Activated CD8-positive, alpha-beta T cell treated with anti-CD3 and anti-CD28 coated beads, Interleukin-2, amount 10 ng/mL, durations not matched to agents 7 days and 5 days (primary cell): ENCODE measurements at regions of chr3 and their contacts with region 1.

Region 1: DNA sequence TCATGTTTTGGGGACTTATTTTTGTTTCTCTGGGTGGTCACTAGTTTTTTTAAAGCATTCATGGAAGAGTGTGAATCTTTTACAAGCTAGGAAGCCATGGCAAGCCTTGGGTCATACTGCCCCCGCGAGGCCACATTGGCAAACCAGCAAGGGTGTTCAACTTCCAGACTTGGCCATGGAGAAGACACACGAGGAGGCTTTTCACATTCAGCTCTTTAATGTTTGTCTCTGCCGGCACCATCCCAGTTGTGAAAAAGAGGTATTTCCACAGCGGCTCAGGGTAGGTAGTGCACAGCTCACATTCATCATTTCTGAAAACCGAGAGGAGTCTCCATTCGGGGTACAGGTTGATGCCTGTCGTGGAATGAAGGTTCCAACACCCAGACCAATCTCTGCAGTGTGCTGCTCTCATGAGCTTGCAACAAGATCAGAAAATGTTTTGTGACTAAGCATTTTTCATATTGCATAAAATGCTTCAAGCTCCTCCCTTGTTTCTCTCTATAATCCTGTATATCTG is 7.7 kb downstream of the CCR5 start:
- DNase-seq: peak; percentile 82
- ATAC-seq: peak; percentile 50
- H3K4me3 Mint-ChIP-seq: no peak overlapping the region
- H3K27ac Mint-ChIP-seq: no peak overlapping the region
- H3K4me1 Mint-ChIP-seq: peaks cover 76% of the 10 kb centered on the region
- H3K27me3 Mint-ChIP-seq: no peaks in the 10 kb centered on the region

Region 2: GRCh38 chr3:46089237-46090011 is 289.1 kb before region 1 on chr3:
- CTCF ChIA-PET with region 1: interaction called, 287 read pairs
- POLR2A ChIA-PET with region 1: interaction called, 4 read pairs
- DNase-seq: no peak
- ATAC-seq: peak; percentile 37
- H3K4me3 Mint-ChIP-seq: no peak overlapping the region
- H3K27ac Mint-ChIP-seq: peak overlapping the region; percentile 53
- H3K4me1 Mint-ChIP-seq: peaks cover 75% of the 10 kb centered on the region
- H3K27me3 Mint-ChIP-seq: no peaks in the 10 kb centered on the region

Region 3: GRCh38 chr3:46098319-46098761 is 280.1 kb before region 1 on chr3:
- CTCF ChIA-PET with region 1: interaction called, 10 read pairs
- POLR2A ChIA-PET with region 1: no interaction called
- DNase-seq: peak; percentile 80
- ATAC-seq: peak; percentile 72
- H3K4me3 Mint-ChIP-seq: peak overlapping the region; percentile 63
- H3K27ac Mint-ChIP-seq: peak overlapping the region; percentile 99
- H3K4me1 Mint-ChIP-seq: peaks cover 92% of the 10 kb centered on the region
- H3K27me3 Mint-ChIP-seq: no peaks in the 10 kb centered on the region

Region 4: DNA sequence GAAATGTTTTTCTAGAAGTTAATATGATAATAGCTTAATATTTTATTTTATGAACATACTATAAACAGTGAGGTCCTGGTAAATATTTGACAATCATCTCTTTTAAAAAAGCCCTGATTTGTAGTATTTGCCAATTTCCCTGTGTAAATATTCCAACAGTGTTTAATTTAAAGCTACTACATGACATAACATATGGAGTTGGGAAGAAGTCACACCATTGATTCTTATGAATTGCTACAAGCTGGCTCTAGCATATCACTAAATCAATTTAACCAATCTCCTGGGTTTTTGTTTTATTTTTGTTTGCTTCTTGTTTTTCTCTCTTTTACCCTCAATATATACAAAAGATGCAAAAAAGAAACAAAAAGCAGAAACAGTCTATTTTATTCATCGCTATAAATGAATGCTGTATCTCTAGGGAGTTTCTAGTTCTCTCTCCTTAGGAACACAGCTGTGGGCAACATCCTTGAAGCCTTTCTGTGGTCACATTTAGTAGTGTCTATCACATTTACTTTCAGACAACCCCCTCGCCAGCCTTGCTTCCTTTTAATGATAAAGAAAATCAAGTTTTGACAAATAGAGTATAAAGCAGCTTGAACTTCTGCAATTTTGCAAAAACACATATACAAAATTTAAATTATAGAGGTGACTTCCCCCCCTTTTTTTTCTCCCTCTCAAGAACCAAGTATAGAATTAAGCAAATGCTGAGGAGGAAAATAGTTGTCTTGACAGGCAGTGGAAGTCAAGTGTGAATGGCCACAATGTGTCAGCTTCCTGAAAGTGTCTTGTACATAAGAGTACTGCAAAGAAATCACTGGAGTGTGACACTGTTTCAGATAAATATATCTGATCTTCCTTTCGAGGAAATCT is 191.8 kb before region 1 on chr3:
- CTCF ChIA-PET with region 1: interaction called, 10 read pairs
- POLR2A ChIA-PET with region 1: no interaction called
- DNase-seq: no peak
- ATAC-seq: peak; percentile 82
- H3K4me3 Mint-ChIP-seq: peak overlapping the region; percentile 2
- H3K27ac Mint-ChIP-seq: peak overlapping the region; percentile 72
- H3K4me1 Mint-ChIP-seq: peaks cover 46% of the 10 kb centered on the region
- H3K27me3 Mint-ChIP-seq: peaks cover 2% of the 10 kb centered on the region

Region 5: DNA sequence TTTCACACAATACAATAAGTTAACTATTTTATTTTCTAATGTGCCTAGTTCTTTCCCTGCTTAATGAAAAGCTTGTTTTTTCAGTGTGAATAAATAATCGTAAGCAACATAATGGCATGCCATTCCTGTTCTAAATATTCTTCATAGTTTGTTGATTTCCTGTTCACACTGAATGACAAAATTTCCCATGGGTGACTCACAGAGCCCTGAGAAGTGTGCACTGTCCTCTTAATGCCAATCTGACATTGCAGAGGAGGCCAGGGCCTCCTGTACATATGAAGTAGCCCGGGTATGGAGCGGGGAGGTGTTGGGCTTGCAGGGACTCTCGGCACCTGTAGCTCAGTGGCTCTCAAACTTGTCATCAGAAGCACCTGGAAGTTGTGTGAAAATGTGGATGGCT is 111.9 kb before region 1 on chr3:
- CTCF ChIA-PET with region 1: interaction called, 12 read pairs
- POLR2A ChIA-PET with region 1: no interaction called
- DNase-seq: no peak
- ATAC-seq: no peak
- H3K4me3 Mint-ChIP-seq: no peak overlapping the region
- H3K27ac Mint-ChIP-seq: no peak overlapping the region
- H3K4me1 Mint-ChIP-seq: peaks cover 51% of the 10 kb centered on the region
- H3K27me3 Mint-ChIP-seq: no peaks in the 10 kb centered on the region

Region 6: GRCh38 chr3:46276502-46277099 is 101.9 kb before region 1 on chr3:
- CTCF ChIA-PET with region 1: interaction called, 28 read pairs
- POLR2A ChIA-PET with region 1: no interaction called
- DNase-seq: peak; percentile 89
- ATAC-seq: peak; percentile 83
- H3K4me3 Mint-ChIP-seq: no peak overlapping the region
- H3K27ac Mint-ChIP-seq: peak overlapping the region; percentile 85
- H3K4me1 Mint-ChIP-seq: peaks cover 64% of the 10 kb centered on the region
- H3K27me3 Mint-ChIP-seq: peaks cover 3% of the 10 kb centered on the region

Region 7: GRCh38 chr3:46334741-46335478 is 43.6 kb before region 1 on chr3:
- CTCF ChIA-PET with region 1: no interaction called
- POLR2A ChIA-PET with region 1: no interaction called
- DNase-seq: no peak
- ATAC-seq: no peak
- H3K4me3 Mint-ChIP-seq: no peak overlapping the region
- H3K27ac Mint-ChIP-seq: no peak overlapping the region
- H3K4me1 Mint-ChIP-seq: peaks cover 41% of the 10 kb centered on the region
- H3K27me3 Mint-ChIP-seq: peaks cover 8% of the 10 kb centered on the region

Region 8: DNA sequence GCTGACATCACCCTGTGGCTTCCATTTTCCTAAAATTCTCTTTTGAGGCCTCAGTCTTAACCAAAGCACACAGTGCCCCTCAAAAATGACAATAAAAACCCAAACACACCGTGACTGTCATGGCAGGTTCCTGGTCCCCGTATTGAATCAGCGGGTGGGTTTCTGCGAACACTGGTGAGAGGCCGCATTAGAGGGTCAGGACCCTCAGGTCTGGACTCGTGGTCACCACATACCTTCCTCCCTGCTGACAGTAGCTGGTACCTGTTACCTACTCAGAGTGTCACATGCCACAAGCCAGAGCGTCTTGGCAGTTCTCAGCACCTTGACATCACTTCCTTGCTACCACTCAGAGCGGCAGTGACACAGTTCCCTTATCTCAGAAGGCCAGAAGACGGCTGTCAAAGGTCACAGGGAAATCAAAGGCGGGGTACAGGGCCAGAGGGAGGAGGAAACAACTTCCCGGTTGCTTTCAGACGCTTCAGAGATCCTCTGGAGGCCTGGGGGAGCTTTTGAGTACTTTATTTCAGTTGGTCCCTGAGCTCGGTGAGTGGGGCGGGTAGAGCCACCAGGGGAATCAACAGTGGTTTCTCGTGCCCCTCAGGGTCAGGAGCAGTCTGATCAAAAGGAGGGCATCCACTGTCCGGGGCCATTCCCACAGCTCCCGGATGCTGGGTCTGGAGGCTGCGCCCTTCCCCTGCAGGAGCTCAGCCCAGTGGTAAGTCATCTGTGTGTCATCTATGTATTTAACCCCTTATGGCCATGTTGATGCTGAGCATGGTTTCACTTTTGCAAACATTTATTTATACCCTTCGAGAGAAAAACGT is 28.5 kb after region 1 on chr3 and contains the starts of genes CCR5AS and CCRL2:
- CTCF ChIA-PET with region 1: interaction called, 11 read pairs
- POLR2A ChIA-PET with region 1: interaction called, 8 read pairs
- DNase-seq: peak; percentile 79
- ATAC-seq: peak; percentile 87
- H3K4me3 Mint-ChIP-seq: peak within 1 kb of the TSS; percentile 87
- H3K27ac Mint-ChIP-seq: peak within 1 kb of the TSS; percentile 93
- H3K4me1 Mint-ChIP-seq: peaks cover 41% of the 10 kb centered on the region
- H3K27me3 Mint-ChIP-seq: peaks cover 10% of the 10 kb centered on the region
- total RNA-seq, gene CCRL2: 10.1 to 11.2 TPM